Right cardiac atrium (tissue), 5 donors: ENCODE measurements at regions of chr12 and their contacts with region 1.

Region 1: GRCh38 chr12:13880613-13881012 is 100.8 kb downstream of the GRIN2B start:
- DNase-seq: no peak
- ATAC-seq: no peak
- H3K4me3 ChIP-seq: no peak overlapping the region
- H3K27ac ChIP-seq: no peak overlapping the region
- H3K4me1 ChIP-seq: no peaks in the 10 kb centered on the region
- H3K27me3 ChIP-seq: no peaks in the 10 kb centered on the region

Region 2: DNA sequence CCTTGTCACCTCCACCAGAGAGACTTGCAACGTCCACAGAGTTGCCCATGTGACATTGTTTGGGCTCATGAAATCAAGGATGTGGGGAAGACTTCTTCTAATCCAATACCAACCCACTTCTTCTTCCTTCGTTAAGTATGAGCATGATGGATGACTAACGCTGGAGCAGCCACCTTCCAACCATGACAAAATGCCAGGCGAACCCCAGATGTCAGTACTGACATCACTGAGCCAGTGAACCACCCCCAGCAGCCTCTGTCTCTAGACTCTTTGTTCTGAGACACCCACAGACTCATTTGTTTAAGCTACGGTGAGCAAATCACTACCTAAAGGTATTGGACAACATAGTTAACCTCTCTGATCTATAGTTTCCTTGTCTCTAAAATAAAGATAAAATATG is 22.9 kb before region 1 on chr12:
- intact Hi-C with region 1: loop called in 1 of 4 experiments (anchors 2 kb)
- DNase-seq: no peak
- ATAC-seq: no peak
- H3K4me3 ChIP-seq: no peak overlapping the region
- H3K27ac ChIP-seq: no peak overlapping the region
- H3K4me1 ChIP-seq: no peaks in the 10 kb centered on the region
- H3K27me3 ChIP-seq: peaks cover 2% of the 10 kb centered on the region